Mammary epithelial cell (primary cell): ENCODE measurements at regions of chr11 and their contacts with region 1.

Region 1: GRCh38 chr11:72541257-72541974 is 107.1 kb upstream of the CLPB start:
- DNase-seq: no peak
- H3K4me3 ChIP-seq: no peak overlapping the region
- H3K27ac ChIP-seq: no peak overlapping the region
- H3K4me1 ChIP-seq: no peaks in the 10 kb centered on the region
- H3K27me3 ChIP-seq: no peaks in the 10 kb centered on the region
- CTCF ChIP-seq: no peak

Region 2: DNA sequence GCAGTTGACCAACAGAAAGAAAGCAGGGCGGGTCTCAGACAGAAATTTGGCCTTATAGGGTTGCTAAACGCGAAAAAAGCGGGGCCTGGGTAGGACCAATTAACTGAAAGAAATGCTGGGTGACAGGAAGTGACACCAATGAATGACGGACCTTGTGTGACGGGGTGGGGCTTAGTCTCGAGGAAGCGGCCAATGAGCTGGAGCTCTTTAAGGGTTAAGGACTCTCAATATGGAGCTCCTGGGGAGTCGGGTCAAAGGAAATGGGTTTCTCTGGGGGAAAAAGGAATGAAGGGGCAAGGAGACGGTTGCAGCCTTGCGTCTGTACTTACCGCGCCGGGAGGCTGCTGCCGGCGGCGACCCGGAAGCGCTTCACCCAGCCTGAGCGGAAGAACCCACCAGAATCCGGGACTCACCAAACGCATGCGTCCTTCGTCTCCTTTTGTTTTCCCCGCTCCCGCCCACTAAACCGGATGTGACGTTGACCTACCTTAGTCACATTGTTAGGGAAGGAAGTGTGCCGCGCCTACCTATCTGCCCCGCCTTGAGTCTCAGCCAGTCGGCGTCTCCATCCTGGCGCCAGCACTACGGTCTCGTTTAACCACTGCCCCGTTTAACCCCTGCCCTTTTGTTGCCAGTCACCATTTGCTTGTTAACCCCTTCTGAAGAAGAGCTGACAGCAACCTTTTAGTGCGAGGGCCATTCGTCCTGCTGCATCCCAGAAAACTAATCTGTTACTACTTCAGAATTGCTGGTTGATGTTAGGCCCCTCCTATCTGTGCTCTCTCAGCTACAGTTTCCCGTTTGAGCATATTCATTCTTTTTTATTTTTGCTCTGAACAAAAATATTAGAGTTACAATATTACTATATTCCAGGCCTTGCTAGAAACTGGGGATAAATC is 428.8 kb before region 1 on chr11 and contains the start of gene ANAPC15:
- CTCF ChIA-PET with region 1: no interaction called
- dilution Hi-C with region 1: loop called (anchors 10 kb)
- in situ Hi-C with region 1: no loop called
- intact Hi-C with region 1: no loop called
- DNase-seq: peak; percentile 100
- H3K4me3 ChIP-seq: peak within 1 kb of the TSS; percentile 71 to 80 (median 71)
- H3K27ac ChIP-seq: peak within 1 kb of the TSS; percentile 97
- H3K4me1 ChIP-seq: peaks cover 38% of the 10 kb centered on the region
- H3K27me3 ChIP-seq: no peaks in the 10 kb centered on the region
- CTCF ChIP-seq: no peak
- total RNA-seq, gene ANAPC15: 21.7 to 64.8 TPM

Region 3: DNA sequence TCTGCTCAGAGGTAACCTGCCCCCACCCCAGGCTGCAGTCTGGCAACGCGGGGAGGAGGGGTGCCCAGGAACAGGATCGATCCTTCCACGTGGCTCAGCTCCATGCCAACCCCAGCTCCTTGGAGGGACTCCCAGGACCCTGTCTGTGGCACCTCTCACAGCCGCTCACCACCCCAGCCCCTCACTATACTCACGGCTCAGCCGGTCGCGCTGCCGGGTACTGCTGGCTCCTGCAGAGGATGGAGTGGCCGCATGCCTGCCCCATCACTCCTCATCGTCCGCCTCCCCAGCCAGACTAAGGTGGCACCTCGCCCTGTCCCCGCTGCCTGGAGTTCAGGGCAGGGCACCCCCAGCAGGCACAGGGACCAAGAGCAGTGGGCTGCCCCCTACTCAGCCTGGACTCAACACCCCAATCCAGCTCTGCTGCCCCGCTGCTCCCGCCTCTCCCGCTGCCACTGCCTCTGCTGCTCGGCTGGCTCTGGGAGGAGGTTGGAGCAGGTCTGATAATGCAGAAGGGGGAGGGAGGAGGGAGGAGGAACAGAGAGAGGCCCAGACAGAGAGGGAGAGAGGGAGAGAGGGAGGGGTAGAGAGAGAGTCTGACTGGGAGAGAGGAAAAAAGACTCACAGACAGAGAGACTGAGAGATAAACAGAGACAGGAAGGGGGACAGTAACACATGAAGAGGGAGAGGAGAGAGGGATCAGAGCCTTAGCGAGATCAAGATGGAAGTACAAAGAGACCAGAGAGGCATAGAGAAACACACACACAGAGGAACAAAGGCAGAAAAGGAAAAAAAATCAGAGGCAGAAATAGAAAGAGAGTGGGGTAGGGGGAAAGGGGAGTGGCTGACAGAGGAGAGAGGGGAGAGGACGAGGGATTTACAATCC is 132.8 kb after region 1 on chr11 and contains the start of gene PDE2A:
- CTCF ChIA-PET with region 1: no interaction called
- dilution Hi-C with region 1: loop called (anchors 5 kb)
- in situ Hi-C with region 1: no loop called
- intact Hi-C with region 1: no loop called
- DNase-seq: no peak
- H3K4me3 ChIP-seq: no peak within 1 kb of the TSS
- H3K27ac ChIP-seq: no peak within 1 kb of the TSS
- H3K4me1 ChIP-seq: no peaks in the 10 kb centered on the region
- H3K27me3 ChIP-seq: peaks cover 6% of the 10 kb centered on the region
- CTCF ChIP-seq: no peak
- total RNA-seq, gene PDE2A: 0.31 to 1.0 TPM

Region 4: GRCh38 chr11:72752088-72752914 is 210.9 kb after region 1 on chr11 and contains the start of gene ARAP1:
- CTCF ChIA-PET with region 1: no interaction called
- dilution Hi-C with region 1: loop called (anchors 10 kb)
- in situ Hi-C with region 1: no loop called
- intact Hi-C with region 1: no loop called
- DNase-seq: peak; percentile 57
- H3K4me3 ChIP-seq: peak within 1 kb of the TSS; percentile 66 to 75 (median 72)
- H3K27ac ChIP-seq: no peak within 1 kb of the TSS
- H3K4me1 ChIP-seq: peaks cover 12% of the 10 kb centered on the region
- H3K27me3 ChIP-seq: no peaks in the 10 kb centered on the region
- CTCF ChIP-seq: no peak
- total RNA-seq, gene ARAP1: 56.8 to 78.3 TPM